Cardiac septum (tissue), 1 donor: ENCODE measurements at regions of chr13 and their contacts with region 1.

Region 1: GRCh38 chr13:44758630-44759383 is 182.7 kb upstream of the TSC22D1 start:
- DNase-seq: no peak

Region 2: DNA sequence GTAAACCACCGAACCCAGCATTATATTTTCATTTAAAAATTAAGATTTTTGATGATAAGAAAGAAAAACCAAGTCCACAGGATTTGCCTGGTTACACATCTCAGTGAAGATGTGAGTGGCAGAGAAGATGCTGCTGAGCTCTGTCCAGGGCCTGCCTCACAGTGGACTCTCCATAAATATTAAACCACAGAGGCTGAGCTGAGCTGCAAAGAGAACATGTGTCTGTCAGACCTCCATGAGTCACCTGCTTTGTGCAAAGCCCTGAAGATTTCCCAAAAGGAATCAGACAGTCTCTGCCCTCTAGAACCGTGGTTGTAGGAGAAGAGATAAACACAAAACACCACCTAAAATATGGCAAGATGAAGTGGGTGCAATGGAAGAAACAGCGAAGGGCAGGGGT is 55.4 kb before region 1 on chr13:
- intact Hi-C with region 1: no loop called
- DNase-seq: no peak

Region 3: GRCh38 chr13:44854313-44855060 is 95.7 kb after region 1 on chr13:
- intact Hi-C with region 1: loop called (anchors 10 kb)
- DNase-seq: no peak